IMR-90 (cell line): ENCODE measurements at regions of chr6 and their contacts with region 1.

Region 1: GRCh38 chr6:6856538-6857523 is 250.9 kb upstream of the RREB1 start:
- DNase-seq: peak; percentile 37
- ATAC-seq: peak; percentile 46
- H3K4me3 ChIP-seq: no peak overlapping the region
- H3K27ac ChIP-seq: no peak overlapping the region
- H3K4me1 ChIP-seq: peaks cover 9% of the 10 kb centered on the region
- H3K27me3 ChIP-seq: no peaks in the 10 kb centered on the region
- CTCF ChIP-seq: no peak
- POLR2A ChIP-seq: no peak
- RAD21 ChIP-seq: no peak

Region 2: GRCh38 chr6:6823568-6824224 is 33.1 kb before region 1 on chr6:
- CTCF ChIA-PET with region 1: no interaction called
- POLR2A ChIA-PET with region 1: interaction called, 13 read pairs
- dilution Hi-C with region 1: no loop called
- in situ Hi-C with region 1: no loop called
- intact Hi-C with region 1: no loop called
- DNase-seq: no peak
- ATAC-seq: no peak
- H3K4me3 ChIP-seq: no peak overlapping the region
- H3K27ac ChIP-seq: no peak overlapping the region
- H3K4me1 ChIP-seq: no peaks in the 10 kb centered on the region
- H3K27me3 ChIP-seq: peaks cover 6% of the 10 kb centered on the region; the same call in 1 of the 2 replicates
- CTCF ChIP-seq: no peak
- POLR2A ChIP-seq: no peak
- RAD21 ChIP-seq: no peak

Region 3: DNA sequence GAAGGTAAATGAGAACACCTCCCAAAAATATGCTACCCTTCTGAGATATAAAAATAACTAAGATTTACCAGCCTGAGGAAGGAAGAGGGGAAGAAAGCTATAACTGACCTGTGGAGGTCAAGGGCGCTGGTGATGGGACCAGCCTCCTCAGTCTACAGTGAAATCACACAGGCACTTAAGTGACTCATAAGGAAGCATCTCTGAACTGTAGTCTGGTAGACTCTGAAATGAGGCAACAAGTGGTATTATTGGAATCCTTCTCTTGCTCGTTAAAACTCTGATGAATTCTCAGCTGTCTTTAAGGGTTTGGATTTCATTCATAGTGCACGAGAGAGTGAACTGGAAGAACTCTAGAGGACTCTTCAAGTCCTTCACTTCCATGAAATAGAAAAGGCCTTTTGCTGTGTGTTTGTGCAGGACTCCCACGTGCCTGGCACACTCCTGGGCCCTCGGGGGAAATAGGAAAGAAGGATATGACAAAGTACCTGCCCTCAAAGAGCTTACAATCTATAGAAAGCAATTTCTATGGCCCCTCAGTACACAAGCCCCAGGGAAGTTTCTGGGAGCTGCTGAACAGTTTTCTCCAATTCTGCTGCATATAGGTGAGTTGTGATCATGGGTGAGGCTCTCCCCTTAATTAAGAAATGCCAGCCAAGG is 19.1 kb after region 1 on chr6:
- CTCF ChIA-PET with region 1: no interaction called
- POLR2A ChIA-PET with region 1: no interaction called
- dilution Hi-C with region 1: no loop called
- in situ Hi-C with region 1: no loop called
- intact Hi-C with region 1: loop called (anchors 1 kb)
- DNase-seq: peak; percentile 80
- ATAC-seq: peak; percentile 89
- H3K4me3 ChIP-seq: no peak overlapping the region
- H3K27ac ChIP-seq: no peak overlapping the region
- H3K4me1 ChIP-seq: peaks cover 3% of the 10 kb centered on the region; the same call in 1 of the 2 replicates
- H3K27me3 ChIP-seq: no peaks in the 10 kb centered on the region
- CTCF ChIP-seq: no peak
- POLR2A ChIP-seq: no peak
- RAD21 ChIP-seq: no peak